PC-3 (cell line): ENCODE measurements at regions of chr9 and their contacts with region 1.

Region 1: DNA sequence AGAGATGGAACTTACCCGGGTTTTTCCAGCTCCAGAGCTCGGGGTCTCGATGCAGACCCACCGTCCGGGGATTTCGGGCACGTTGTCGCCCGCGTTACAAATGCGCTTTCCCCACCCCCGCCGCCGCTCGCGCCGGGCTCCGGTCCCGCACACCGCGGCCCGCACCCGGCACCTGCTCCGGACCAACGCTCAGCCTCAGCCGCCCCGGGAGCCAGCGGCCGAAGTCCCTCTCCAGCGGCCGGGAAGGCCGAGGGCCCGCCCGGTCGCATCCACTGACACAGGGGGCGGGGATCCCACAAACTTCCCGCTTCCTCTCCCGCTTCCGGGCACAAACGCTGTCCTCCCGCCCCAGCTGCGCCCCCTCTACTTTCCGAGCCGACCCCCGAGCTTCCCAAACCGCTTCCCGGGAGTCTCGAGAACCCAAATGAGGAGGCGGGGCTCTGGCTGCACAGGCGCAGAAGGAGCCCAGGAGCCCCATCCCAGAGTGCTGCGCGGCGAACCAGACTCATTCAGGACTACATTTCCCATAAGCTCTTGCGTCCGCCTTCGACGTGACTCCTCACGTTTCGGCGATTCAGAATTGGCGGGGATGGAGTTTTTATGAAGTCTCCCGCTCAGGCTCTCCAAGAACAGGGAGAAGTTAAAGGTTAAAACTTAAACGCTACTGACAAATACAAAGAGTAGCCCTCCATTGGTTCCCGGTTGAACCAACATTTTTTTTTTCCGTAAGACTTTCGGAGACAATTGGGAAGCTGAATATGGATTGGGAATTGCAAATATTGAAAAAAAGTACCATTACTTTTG is at the start of gene ZNF782:
- DNase-seq: peak; percentile 91
- ATAC-seq: peak; percentile 70
- H3K4me3 ChIP-seq: peak within 1 kb of the TSS; percentile 91
- H3K27ac ChIP-seq: no peak within 1 kb of the TSS
- H3K4me1 ChIP-seq: peaks cover 40% of the 10 kb centered on the region
- H3K27me3 ChIP-seq: no peaks in the 10 kb centered on the region
- CTCF ChIP-seq: no peak
- total RNA-seq, gene ZNF782: 5.0 and 5.3 TPM in 2 replicates

Region 2: GRCh38 chr9:96777426-96777864 is 76.8 kb before region 1 on chr9:
- CTCF ChIA-PET with region 1: no interaction called
- POLR2A ChIA-PET with region 1: no interaction called
- intact Hi-C with region 1: loop called (anchors 5 kb)
- DNase-seq: no peak
- ATAC-seq: no peak; the same call in none of the 2 replicates
- H3K4me3 ChIP-seq: peak overlapping the region; percentile 71
- H3K27ac ChIP-seq: no peak overlapping the region
- H3K4me1 ChIP-seq: peaks cover 4% of the 10 kb centered on the region; the same call in 1 of the 2 replicates
- H3K27me3 ChIP-seq: no peaks in the 10 kb centered on the region
- CTCF ChIP-seq: no peak

Region 3: DNA sequence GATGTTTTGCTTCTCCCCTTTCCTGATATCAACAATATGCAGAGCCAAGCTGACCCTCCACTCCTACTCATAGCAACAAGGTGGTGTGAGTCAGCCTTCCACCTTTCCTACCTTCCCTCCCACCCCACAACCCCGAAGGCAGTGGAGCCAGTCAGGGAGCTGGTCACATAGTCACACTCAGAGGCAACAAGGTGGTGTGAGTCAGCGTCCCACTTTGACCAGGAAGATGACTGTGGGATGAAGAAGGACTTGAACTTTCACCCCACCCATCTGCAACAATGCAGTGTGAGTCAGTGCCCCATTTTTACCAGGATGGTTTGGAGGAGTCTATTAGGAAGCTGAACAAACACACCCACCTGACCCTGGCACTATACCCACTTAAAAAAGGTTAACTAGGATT is 30.2 kb after region 1 on chr9:
- CTCF ChIA-PET with region 1: no interaction called
- POLR2A ChIA-PET with region 1: no interaction called
- intact Hi-C with region 1: no loop called
- DNase-seq: peak; percentile 94
- ATAC-seq: peak; percentile 99
- H3K4me3 ChIP-seq: no peak overlapping the region
- H3K27ac ChIP-seq: peak overlapping the region; percentile 57
- H3K4me1 ChIP-seq: peaks cover 17% of the 10 kb centered on the region
- H3K27me3 ChIP-seq: no peaks in the 10 kb centered on the region
- CTCF ChIP-seq: no peak

Region 4: DNA sequence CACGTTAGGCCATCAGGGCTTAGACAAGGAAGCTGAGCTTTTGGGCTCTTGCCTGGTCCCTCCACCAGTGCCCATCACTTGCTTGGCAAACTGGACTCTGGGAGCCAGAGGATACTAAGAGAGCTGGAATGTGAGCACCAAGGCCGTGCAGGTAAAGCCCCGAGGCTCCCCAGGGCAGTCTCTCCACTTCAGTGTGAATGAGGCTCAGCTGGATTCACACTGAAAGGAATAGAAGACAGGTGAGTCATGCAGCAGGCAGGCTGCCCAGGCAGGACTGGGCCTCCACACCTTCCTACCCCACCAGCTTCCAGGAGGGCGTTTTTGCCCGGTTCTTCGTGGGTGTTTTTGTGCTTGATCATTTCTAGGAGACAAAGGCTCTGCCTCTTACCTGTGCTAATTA is 191.9 kb after region 1 on chr9:
- CTCF ChIA-PET with region 1: no interaction called
- POLR2A ChIA-PET with region 1: no interaction called
- intact Hi-C with region 1: loop called (anchors 10 kb)
- DNase-seq: peak; percentile 97
- ATAC-seq: peak; percentile 91
- H3K4me3 ChIP-seq: peak overlapping the region; percentile 34; the same call in 1 of the 2 replicates
- H3K27ac ChIP-seq: peak overlapping the region; percentile 84
- H3K4me1 ChIP-seq: peaks cover 36% of the 10 kb centered on the region
- H3K27me3 ChIP-seq: no peaks in the 10 kb centered on the region
- CTCF ChIP-seq: no peak

Region 5: DNA sequence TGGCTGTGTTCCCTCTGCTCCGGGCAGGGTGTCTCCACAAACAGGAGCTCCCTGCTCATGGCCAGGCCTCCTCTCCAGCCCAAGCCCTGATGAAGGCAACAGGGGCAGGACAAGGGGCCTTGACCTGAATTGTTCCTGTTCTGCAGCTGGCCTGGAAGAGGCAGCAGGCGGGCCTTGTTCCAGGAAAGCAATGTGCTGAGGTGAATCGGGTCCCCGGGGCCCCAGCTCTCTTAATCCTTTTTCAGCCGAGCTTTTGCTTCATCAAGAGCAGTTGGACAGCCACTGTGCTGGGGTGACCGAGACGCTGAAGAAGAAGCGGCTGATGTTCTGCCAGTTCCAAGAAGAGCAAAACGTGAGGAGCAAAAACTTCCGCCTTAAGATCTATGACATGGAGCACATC is 494.6 kb after region 1 on chr9:
- CTCF ChIA-PET with region 1: no interaction called
- POLR2A ChIA-PET with region 1: no interaction called
- intact Hi-C with region 1: no loop called
- DNase-seq: no peak
- ATAC-seq: no peak
- H3K4me3 ChIP-seq: no peak overlapping the region
- H3K27ac ChIP-seq: no peak overlapping the region
- H3K4me1 ChIP-seq: no peaks in the 10 kb centered on the region
- H3K27me3 ChIP-seq: no peaks in the 10 kb centered on the region
- CTCF ChIP-seq: no peak